ENCODE measurements at regions of chr9 and their contacts with region 1.

Region 1: DNA sequence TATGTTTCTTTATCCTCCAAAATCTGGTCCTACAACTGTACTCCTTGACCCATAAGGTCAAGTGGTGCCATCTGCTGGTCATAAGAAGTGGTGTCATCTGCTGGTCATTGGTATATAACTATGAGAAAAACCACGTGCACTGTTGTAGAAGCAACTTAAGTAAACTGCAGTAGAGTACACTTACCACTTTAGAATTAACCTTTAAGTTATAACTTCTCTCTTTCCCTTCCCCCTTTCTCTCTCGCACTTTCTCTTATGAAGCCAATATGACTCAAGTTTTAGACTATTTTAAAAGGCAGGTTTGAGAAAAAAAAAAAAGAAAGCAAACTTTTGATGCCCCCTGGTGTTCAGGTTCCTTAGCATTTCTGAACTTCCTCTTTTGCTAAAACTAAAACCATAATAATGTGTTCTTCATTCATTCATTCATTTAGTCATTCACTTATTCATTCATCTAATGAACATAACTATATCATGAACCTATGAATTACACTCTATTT is 12.8 kb upstream of the MTAP start:
- DNase-seq: peak; percentile 49
- CTCF ChIP-seq: peak; percentile 76

Region 2: DNA sequence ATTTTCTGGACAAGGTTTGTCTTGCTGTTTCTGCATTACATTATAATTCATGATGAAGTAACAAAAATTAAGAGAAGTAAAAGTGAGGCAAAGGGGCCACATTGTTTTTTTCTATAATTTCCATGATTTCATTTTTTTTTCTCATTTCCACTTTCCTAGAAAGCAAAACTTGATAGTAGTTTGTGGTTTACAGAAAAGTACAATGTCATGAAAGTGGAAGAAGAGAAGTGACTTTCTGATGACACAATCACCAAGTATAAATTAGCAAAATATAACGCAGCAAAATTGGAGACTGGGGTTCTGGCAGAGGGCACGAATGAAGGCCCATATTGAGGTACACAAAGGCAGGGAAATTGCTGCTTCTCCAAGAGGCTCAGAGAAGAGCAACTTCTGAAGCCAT is 544.8 kb before region 1 on chr9:
- in situ Hi-C with region 1: loop called (anchors 25 kb)
- DNase-seq: no peak
- CTCF ChIP-seq: no peak

Region 3: GRCh38 chr9:21317956-21318923 is 471.3 kb before region 1 on chr9:
- in situ Hi-C with region 1: loop called (anchors 25 kb)
- DNase-seq: peak; percentile 21
- CTCF ChIP-seq: peak; percentile 71

Region 4: DNA sequence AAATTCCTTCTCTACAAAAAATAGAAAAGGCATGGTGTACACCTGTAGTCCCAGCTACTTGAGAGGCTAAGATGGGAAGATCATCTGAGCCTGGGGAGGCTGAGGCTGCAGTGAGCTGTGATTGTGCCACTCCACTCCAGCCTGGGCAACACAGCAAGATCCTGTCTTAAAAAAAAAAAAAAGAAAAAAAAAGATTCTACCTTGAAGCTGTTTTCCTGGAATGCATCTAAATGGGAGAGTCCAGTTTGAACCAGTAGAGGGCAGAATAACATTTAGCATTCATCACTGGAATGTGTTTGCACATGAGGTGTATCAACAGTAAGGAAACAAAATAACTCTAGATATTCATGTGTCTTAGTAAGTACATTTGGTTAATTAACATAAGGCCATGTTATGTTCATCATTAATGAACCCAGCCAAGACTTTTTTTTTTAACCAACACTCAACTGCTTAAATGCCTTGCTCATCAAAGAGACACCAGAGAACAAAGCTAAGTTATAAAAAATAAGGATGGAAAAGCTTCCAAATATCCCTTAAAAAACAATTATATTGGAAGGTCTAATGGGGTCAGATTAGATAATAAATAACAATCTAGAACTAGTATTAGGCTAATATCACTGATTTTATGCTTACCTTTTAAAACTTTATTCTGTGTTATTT is 323.6 kb before region 1 on chr9:
- in situ Hi-C with region 1: loop called (anchors 10 kb)
- DNase-seq: peak; percentile 39
- CTCF ChIP-seq: peak; percentile 72

Region 5: GRCh38 chr9:21605489-21605931 is 184.1 kb before region 1 on chr9:
- in situ Hi-C with region 1: no loop called
- DNase-seq: no peak
- CTCF ChIP-seq: no peak

Region 6: GRCh38 chr9:21709464-21710058 is 80.0 kb before region 1 on chr9:
- in situ Hi-C with region 1: loop called (anchors 5 kb)
- DNase-seq: peak; percentile 20
- CTCF ChIP-seq: peak; percentile 75

Measured in GM13976 (cell line).